ENCODE measurements at regions of chr12 and their contacts with region 1.

Region 1: DNA sequence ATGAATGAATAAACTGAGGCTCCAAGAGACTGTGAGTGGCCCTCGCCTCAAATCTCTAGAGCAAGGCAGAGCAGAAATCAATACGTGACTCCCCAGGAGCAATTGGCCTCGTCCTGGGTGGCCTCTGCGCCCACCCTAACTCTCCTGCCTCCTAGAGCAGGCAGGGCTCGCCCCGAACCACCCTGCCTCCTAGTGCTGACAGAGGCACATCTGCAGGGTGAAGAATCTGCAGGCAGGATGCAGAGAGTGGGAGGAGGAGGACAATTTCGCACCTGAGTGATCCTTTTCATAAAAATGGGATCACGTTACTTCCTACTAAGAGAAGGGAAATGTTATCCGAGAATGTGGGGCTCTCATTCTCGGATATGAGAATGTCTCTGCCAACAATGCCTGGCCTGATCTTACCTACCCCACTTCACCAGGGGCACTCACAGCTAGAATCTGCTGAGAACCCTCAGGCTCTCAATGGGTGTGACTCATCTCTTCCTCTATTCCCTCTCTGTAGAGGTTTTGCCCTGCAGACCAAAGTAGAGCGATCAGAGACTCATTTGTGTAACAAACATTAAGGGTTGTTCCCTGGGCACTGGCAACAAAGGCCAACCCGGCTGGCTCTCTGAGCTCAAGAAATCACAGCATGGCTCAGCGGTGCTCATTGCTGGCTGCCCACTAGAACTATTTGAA is 61.7 kb upstream of the BCL2L14 start:
- DNase-seq: peak; percentile 58
- CTCF ChIP-seq: peak; percentile 69

Region 2: DNA sequence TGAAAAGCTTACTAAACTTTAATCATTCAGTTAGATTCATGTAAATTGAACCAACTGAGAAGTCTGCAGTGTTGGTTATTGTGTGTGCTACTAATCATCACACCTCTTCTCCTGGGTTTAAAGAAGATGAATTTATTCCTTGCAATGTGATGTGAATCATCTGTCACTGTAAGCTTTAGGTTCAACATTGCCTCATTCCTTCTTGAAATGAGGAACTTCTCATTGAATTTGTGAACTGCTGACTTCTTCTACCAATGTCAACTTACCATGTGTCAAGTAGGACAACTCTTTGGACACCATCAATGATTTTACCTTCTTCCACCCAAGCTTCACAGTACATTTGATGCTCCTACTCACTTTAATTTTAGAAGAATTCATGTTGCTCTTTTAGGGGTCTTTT is 596.3 kb before region 1 on chr12:
- in situ Hi-C with region 1: no loop called
- DNase-seq: no peak
- CTCF ChIP-seq: no peak

Region 3: DNA sequence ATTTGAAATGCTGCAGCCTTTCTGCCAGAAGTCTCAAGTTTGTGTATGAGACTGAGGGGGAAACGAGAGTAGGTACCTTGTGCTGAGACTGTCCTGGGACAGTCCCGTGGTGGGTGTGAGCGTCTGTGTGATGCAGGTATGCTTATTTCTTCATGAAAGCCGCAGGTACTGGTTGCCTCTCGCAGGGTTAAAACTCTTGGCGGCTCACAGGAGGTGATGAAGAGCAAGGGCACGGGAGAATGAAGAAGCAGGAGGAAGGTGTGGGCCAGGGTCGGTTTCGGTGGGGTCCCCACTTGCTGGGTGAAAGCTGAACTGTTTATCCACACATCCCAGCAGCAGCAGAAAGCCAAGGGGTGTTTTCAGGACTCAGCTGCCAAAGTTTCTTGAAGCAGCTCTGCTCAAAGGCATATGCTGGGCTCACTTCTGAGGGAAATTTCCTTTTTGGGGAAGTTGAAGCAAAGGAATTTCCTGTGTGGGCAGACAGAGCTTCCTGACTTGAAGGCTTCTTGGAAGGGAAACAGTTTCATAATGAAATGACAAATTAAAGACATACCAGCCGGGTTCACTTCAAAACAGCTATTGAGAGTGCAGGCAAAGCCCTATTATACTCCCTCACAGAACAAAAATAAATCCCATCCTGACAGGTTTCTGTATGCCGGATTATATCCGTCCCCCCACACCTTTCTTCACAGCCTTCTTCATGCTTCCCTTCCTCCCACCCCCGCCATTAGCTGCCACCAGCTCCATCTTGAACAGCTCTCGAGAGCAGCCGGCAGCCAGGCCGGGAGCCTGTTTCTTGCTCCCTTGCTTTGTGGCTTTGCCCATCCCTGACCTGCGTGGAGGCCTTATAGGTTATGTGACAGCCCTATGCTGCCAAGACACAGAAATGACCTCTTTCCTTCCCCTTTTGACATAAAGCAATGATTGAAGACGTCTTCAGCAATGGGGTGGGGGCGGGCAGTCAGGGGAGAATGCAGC is 243.0 kb before region 1 on chr12:
- in situ Hi-C with region 1: loop called (anchors 25 kb)
- DNase-seq: peak; percentile 38
- CTCF ChIP-seq: no peak

Region 4: GRCh38 chr12:11836282-11837151 is 172.6 kb before region 1 on chr12:
- in situ Hi-C with region 1: loop called (anchors 10 kb)
- DNase-seq: peak; percentile 81
- CTCF ChIP-seq: no peak

Region 5: DNA sequence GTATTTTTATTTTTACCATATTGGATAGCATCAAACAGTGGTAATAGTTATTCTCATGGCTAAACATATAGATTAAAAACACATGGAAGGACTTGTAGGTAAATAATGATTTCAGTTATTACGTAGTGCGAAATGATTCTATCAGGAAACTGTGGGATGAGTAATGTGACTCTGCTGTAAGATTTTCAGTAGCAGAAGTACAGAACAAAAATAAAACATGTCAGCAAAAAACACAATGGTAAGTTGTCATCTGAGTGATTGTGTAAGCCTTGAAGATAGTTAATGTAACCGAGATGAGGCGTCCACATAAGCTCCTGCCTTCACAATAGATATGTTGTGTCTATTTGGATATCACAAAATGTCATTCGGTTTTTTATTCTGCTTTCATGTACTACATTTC is 447.6 kb after region 1 on chr12:
- in situ Hi-C with region 1: no loop called
- DNase-seq: no peak
- CTCF ChIP-seq: no peak